ENCODE measurements at regions of chr1 and their contacts with region 1.

Region 1: DNA sequence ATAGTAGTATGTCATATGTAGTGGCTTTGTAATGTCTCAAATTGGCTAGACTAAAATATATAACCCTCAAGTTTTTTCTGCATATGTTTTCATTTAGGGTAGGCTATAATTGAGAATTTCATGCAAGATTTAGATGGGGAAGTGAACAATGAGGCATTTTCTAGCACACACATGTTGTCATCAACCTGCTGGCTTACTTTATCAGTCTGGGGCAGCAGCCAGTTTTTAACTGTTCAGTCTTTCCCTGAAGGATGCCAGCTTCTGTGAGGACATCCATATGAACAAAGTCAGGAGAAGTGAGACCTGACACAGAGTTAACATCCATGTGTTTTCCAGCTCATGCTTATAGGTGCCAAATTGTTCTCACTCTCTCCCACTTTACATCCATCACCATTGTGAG is 74.7 kb upstream of the OLFM3 start:
- DNase-seq: no peak
- ATAC-seq: no peak
- H3K4me3 ChIP-seq: no peak overlapping the region
- H3K27ac ChIP-seq: no peak overlapping the region
- H3K4me1 ChIP-seq: no peaks in the 10 kb centered on the region
- H3K27me3 ChIP-seq: no peaks in the 10 kb centered on the region
- CTCF ChIP-seq: no peak

Region 2: DNA sequence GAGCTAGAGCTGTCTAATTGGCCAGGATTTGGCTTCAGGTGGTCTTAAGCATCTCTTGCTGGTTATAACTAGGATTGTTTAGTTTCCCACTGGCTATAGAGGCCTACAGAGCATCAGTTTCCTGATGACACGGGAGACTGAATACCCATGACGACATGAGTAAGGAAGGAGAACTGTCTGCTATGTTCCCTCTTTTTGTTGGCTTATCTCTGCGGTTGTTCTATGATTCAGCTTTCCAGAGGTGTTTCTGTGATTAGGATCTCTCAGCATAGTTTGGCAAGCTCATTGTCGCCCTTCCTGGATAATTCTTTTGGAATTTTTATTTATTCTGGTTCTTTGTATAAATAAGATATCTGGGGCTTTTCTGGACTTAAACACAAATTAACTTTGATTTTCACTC is 238.1 kb before region 1 on chr1:
- intact Hi-C with region 1: no loop called
- DNase-seq: no peak
- ATAC-seq: no peak
- H3K4me3 ChIP-seq: no peak overlapping the region
- H3K27ac ChIP-seq: no peak overlapping the region
- H3K4me1 ChIP-seq: no peaks in the 10 kb centered on the region
- H3K27me3 ChIP-seq: no peaks in the 10 kb centered on the region
- CTCF ChIP-seq: no peak

Region 3: DNA sequence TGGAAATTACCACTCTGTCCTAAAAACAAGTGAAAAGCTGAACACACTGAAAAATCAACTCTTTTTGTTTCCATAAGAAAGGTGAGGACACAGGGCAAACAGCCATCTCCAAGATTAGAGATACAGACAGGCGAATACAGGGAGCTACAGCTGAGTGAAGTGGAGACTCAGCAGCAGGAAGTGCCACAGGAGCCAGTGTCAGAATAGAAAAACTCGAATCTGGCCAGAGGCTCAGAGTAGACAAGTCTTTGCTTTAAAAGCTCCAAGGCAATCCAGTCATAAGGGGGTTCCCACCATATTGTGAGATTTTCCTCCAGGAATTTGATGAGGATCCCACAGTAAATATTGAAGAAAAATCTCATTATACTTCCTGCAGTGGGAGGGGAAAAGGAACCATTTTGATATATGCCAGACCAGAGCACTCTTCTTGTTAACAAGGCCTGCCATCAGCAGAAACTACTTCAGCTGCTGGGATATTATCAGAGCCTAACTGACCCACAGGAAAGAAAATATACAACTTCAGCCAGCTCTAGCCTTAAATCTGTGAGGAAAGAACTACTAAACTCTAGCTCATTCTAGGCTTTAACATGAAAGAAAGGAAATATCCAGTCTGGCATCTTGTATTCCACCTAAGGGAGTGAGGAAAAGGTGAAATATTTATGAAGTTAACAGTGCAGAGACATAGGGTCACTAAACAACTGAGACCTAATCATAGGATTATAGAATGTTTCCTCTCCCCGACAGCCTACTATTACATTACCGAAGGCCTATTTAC is 181.5 kb after region 1 on chr1:
- intact Hi-C with region 1: loop called in 1 of 10 experiments (anchors 10 kb)
- DNase-seq: no peak
- ATAC-seq: no peak
- H3K4me3 ChIP-seq: no peak overlapping the region
- H3K27ac ChIP-seq: no peak overlapping the region
- H3K4me1 ChIP-seq: no peaks in the 10 kb centered on the region
- H3K27me3 ChIP-seq: no peaks in the 10 kb centered on the region
- CTCF ChIP-seq: no peak